ENCODE measurements at regions of chr5 and their contacts with region 1.

Region 1: GRCh38 chr5:120055858-120056257 is 408.2 kb upstream of the PRR16 start:
- DNase-seq: no peak
- H3K4me3 ChIP-seq: no peak overlapping the region
- H3K27ac ChIP-seq: peak overlapping the region; percentile 69 to 84
- H3K4me1 ChIP-seq: peaks cover 0 to 20% of the 10 kb centered on the region in 2 donors
- H3K27me3 ChIP-seq: no peaks in the 10 kb centered on the region
- CTCF ChIP-seq: peak in 1 of 3 experiments; percentile 46

Region 2: GRCh38 chr5:120124961-120125360 is 69.1 kb after region 1 on chr5:
- intact Hi-C with region 1: no loop called
- DNase-seq: no peak
- H3K4me3 ChIP-seq: no peak overlapping the region
- H3K27ac ChIP-seq: no peak overlapping the region
- H3K4me1 ChIP-seq: no peaks in the 10 kb centered on the region
- H3K27me3 ChIP-seq: no peaks in the 10 kb centered on the region
- CTCF ChIP-seq: no peak

Region 3: DNA sequence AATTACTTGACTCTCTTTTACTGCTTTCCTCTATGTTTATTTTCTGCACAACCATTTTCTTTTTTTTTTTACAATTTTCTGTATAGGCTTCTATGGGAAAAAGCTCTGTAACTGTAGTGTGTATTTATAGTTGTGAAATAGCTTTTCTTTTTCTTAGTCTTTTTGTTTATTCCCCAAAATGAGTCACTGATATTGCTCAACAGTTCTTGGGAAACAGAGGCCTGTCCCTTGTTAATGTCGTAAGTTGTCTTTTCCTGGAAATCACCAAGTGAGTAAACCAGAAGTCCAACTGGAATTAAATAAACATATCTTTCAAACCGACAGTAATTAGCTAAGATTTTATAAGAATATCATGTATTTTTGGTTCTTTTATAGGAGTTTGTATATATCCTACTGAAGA is 83.2 kb after region 1 on chr5:
- intact Hi-C with region 1: loop called (anchors 2 kb)
- DNase-seq: peak in 1 of 2 donors; percentile 66
- H3K4me3 ChIP-seq: no peak overlapping the region
- H3K27ac ChIP-seq: peak overlapping the region; percentile 78 to 80
- H3K4me1 ChIP-seq: peaks cover 0 to 6% of the 10 kb centered on the region in 2 donors
- H3K27me3 ChIP-seq: no peaks in the 10 kb centered on the region
- CTCF ChIP-seq: no peak

Region 4: DNA sequence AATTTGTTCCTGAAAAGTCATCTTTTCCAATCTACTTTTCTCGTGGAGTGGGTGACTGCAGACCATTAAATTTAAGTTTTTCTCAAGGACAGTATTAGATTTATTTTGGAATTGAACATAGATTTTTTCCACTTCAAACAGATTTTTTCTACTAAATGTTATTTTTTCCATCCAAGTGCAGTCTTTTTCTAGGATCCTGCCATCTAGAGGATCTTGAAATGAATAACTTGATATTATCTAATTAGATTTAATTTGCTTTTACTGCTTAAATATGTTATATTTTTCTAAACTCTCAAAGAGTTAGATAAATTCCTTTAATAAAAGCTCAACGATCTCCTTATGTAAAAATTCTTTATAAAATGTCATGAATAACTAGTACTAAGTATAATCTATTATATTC is 271.3 kb after region 1 on chr5:
- intact Hi-C with region 1: loop called (anchors 10 kb)
- DNase-seq: no peak
- H3K4me3 ChIP-seq: no peak overlapping the region
- H3K27ac ChIP-seq: no peak overlapping the region
- H3K4me1 ChIP-seq: no peaks in the 10 kb centered on the region
- H3K27me3 ChIP-seq: no peaks in the 10 kb centered on the region
- CTCF ChIP-seq: peak in 1 of 3 experiments; percentile 28

Region 5: DNA sequence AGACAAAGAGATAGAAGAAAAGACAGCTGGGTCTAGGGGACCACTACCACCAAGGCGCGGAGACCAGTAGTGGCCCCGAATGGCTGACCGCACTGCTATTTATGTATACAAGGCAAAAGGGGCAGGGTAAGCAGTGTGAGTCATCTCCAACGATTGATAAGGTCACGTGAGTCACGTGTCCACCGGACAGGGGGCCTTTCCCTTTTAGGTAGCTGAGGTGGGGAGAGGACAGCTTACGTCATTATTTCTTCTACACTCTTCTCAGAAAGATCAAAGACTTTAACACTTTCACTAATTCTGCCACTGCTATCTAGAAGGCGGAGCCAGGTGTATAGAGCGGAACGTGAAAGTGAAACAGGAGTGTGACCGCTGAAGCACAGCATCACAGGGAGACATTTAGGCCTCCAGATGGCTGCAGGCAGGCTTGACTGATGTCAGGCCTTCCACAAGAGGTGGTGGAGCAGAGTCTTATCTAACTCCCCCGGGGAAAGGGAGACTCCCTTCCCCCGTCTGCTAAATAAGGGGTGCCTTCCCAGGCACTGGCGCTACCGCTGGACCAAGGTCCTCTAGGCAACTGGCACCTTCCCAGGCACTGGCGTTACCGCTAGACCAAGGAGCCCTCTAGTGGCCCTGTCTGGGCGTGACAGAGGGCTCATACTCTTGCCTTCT is 402.1 kb after region 1 on chr5:
- intact Hi-C with region 1: loop called (anchors 2 kb)
- DNase-seq: peak; percentile 25 to 90
- H3K4me3 ChIP-seq: peak overlapping the region; percentile 47 to 60
- H3K27ac ChIP-seq: peak overlapping the region; percentile 42 to 58
- H3K4me1 ChIP-seq: peaks cover 3 to 12% of the 10 kb centered on the region in 2 donors
- H3K27me3 ChIP-seq: no peaks in the 10 kb centered on the region
- CTCF ChIP-seq: peak; percentile 57 to 79 (median 79)

Region 6: GRCh38 chr5:120803282-120803681 is 747.4 kb after region 1 on chr5:
- intact Hi-C with region 1: loop called (anchors 10 kb)
- DNase-seq: no peak
- H3K4me3 ChIP-seq: no peak overlapping the region
- H3K27ac ChIP-seq: no peak overlapping the region
- H3K4me1 ChIP-seq: no peaks in the 10 kb centered on the region
- H3K27me3 ChIP-seq: no peaks in the 10 kb centered on the region
- CTCF ChIP-seq: peak in 2 of 3 experiments; percentile 19 to 38

Measured in ascending aorta (tissue), 2 donors.